ENCODE measurements at regions of chr12 and their contacts with region 1.

Region 1: DNA sequence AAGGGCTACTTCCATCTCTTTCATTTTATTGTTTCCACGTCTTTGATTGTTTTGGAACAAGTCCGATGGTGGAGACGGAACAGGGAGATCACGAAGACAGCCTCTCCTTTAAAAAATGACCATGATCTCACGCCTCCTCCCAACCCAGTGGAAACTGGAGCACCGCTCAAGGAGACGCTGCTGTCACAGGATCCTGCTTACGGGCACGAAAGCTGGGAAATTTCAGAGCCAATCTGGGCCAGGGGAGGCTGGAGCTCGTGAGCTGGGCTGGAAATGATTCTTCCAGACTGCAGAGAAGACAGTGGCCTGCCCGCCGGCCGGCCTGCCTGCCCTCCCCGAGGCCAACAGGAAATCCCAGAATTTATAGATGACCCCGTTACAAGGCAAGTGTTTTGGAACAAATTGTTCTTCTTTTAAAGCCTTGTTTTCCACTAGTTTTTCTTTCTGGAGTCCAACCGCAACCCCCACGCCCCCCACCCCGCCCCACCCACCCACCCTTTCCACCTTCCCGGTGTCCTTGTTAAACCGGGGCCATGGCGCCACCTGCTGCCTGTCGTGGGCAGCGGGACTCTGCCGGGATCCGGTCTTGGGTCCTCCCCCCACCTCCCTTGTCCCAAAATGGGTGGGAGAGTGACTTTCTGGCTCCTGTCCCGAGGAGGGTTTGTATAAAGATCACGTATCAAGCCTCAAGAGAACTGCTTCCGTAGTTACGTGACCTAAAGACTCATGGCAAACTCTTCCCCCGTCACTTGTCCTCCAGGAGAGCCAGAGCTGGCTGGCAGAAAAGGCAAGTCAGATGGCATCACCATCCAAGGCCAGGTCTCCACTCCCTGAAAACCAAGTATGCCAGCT is 40.3 kb downstream of the MAP1LC3B2 start:
- DNase-seq: peak; percentile 96

Region 2: DNA sequence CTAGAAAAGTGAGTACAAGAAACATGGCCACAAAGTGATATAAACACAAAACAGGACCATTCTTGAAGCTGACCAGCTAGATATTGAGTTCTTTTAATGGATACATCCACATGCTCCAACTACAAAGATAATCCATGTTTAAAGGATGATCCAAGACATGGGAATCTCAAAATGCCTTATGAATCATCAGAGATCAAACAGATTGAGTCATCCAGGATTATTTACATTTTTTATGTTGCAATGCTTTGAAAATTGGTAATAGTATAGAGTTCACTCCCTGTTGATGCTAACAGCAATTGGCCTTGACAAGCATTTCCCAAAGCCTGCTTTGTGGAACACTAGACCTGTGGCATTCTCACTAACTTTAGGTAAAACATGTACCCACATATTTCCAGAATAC is 1622.6 kb before region 1 on chr12:
- intact Hi-C with region 1: no loop called
- DNase-seq: no peak

Region 3: GRCh38 chr12:116009805-116010204 is 589.7 kb before region 1 on chr12:
- intact Hi-C with region 1: loop called (anchors 5 kb)
- DNase-seq: no peak

Region 4: DNA sequence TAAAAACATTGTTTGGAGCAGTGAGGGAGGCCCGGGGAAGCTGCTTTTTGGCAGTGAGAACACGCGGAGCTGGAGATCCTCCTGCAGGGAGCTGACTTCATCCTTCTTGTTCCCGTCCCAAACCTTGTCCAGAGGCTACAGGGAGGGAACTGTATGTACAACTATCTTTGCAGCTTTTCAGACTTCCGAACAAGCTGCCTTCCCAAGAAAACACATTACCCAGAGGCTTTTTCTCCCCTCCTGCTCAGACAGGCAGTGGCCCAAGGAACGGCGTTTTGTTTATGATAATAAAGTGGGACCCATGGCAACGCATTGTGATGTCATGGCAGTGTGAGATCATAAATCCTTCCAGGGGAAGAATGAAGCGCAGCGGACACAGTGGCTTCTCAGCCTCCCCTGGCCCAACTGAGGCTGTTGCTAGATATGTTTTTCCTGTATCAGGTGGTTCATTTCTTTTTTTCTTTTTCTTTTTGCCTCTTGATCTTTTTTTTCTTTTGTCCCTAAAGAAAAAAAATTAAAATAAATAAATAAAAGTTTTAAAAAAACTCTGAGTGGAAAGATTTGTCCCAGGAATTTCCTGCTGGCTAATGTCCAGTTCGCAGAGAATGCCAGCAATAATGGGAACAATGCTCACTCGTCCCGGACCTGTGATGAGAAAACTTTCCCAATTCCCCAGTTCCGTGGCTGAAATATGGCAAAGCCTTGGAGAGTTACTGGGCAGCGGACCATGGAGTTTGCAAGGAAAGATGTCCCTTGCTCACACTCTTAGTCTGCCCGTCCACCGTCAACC is 143.8 kb before region 1 on chr12:
- intact Hi-C with region 1: loop called in 1 of 2 experiments (anchors 10 kb)
- DNase-seq: peak; percentile 94

Region 5: GRCh38 chr12:116525418-116526001 is 74.0 kb before region 1 on chr12:
- intact Hi-C with region 1: loop called in 1 of 2 experiments (anchors 10 kb)
- DNase-seq: peak; percentile 90